Posterior vena cava (tissue), 2 donors: ENCODE measurements at regions of chr19 and their contacts with region 1.

Region 1: DNA sequence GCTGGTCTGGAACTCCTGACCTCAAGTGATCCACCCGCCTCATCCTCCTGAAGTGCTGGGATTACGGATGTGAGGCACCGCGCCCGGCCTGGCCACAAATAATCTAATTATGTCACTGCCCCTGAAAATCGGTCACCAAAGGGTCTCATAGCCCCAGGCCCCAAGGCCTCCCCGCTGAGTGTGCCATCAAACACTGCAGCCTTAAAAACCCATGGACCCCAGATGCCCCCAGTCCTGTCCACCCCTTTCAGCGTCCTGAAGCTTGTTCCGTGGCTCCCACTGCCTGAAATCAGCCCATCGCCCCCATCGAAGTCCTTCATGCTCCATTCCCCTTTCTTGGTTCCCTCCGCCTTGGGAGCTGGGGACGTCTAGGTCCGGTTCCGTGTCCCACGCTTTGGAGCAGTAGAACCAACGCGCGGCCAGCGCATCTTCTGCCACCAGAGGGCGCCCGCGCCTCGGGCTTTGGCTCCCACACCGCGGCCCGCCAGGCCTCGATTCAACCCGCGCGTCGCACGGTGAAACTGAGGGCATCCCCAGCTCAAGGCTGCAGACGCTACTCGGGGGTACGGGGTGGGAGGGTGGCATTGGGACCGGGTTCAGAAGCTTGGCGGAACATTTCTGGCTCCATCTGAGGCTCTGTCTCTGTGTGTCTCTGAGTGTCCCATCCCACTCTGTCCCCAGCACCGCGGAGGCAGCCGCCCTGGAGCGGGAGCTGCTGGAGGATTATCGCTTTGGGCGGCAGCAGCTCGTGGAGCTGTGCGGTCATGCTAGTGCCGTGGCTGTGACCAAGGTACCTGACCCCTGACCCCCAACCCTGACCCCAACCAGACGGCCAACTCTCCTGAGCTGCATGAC is 3.5 kb downstream of the YJEFN3 start:
- DNase-seq: peak; percentile 95

Region 2: DNA sequence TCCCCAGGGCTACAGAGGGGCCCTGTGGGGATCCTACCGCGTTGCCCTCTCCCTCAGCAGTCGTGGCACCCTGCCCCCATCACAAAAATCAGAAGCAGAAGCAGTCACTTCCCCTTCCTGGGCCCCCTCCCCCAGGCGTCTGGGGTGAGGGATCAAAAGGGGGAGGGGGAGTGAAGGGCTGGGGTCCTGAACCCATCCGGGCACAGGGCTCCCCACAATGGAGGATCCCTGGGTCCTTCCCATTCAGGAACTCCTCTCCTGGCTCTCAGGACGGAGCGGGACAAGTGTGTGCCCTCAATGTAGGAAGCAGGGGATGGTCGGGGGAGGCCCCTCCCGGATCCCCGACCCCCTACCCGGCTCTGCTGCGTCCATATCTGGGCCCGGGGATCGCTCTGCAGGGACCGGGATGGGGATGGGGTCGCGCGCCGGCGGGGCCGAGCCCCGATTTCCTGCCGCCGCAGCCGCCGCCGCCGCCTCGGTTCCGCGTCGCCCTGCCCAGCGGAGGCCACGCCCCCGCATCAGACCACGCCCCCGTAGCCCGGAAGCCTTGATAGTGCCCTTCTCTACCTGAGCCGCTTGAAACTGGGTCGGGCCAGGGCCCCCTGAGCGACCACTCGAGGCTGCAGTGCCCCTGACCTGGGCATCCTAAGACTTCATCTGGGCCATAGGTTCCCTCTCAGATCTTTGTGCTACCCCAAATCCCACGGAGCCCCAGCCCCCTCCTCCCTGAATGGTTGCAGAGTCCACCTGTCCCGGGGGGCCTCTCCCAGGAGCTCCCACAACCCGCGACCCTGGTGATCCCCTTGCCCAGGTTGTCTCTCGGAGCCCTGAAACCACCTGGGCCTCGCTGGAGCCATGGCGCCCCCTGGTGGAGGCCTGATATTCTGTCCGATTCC is 111.2 kb after region 1 on chr19 and contains the start of gene GMIP:
- intact Hi-C with region 1: loop called (anchors 2 to 5 kb)
- DNase-seq: peak; percentile 92
- total RNA-seq, gene GMIP: 8.3 to 11.4 TPM

Region 3: DNA sequence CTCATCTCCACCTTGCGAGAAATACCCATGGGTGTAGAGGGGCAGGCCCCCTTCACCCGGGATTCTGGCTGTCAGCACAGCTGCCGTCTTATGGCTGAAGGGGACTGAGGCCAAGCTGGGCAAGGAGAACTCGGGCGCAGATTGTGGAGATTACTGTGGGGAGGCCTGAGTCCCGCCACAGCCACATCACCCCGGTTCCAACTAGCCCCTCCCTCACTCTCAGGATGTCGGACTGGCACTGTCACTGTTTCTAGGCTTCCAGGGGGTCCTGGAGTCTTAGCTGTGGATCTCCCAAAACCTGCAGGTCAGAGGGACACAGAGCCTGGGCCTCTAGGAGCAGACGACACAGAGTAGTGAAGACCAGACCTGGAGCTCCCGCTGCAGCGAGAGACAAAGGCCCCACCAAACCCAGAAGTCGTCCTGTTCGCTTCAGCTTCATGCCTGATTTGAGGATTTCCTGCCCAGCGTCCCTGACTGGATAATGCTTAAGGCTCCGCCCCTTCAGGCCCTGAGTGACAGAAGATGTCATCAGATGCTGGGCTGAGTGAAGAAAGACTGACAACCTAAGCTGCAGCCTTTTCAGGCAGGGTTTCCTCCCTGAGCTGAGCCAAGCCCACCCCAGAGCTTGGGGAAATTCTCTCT is 424.4 kb after region 1 on chr19:
- intact Hi-C with region 1: loop called in 1 of 2 experiments (anchors 2 kb)
- DNase-seq: no peak